T-cell (primary cell): ENCODE measurements at regions of chr1 and their contacts with region 1.

Region 1: GRCh38 chr1:116737020-116737854 is 17.0 kb upstream of the CD2 start:
- DNase-seq: peak; percentile 55 to 88 (median 72)
- ATAC-seq: peak; percentile 57 to 83 (median 79)
- H3K4me3 ChIP-seq: peak overlapping the region in 1 of 2 donors; percentile 7
- H3K4me3 Mint-ChIP-seq: peak overlapping the region; percentile 56 to 76 (median 75)
- H3K27ac ChIP-seq: peak overlapping the region; percentile 96
- H3K27ac Mint-ChIP-seq: peak overlapping the region; percentile 97 to 98
- H3K4me1 ChIP-seq: peaks cover 31 to 48% of the 10 kb centered on the region in 2 experiments
- H3K4me1 Mint-ChIP-seq: peaks cover 45 to 49% (median 48%) of the 10 kb centered on the region in 3 donors
- H3K27me3 ChIP-seq: no peaks in the 10 kb centered on the region
- H3K27me3 Mint-ChIP-seq: no peaks in the 10 kb centered on the region

Region 2: GRCh38 chr1:116724765-116725375 is 12.4 kb before region 1 on chr1:
- CTCF ChIA-PET with region 1: interaction called, 5 to 13 read pairs
- POLR2A ChIA-PET with region 1: interaction called in 1 of 2 experiments, 3 read pairs
- DNase-seq: peak; percentile 46 to 89 (median 71)
- ATAC-seq: peak; percentile 61 to 68 (median 62)
- H3K4me3 ChIP-seq: no peak overlapping the region
- H3K4me3 Mint-ChIP-seq: no peak overlapping the region
- H3K27ac ChIP-seq: no peak overlapping the region
- H3K27ac Mint-ChIP-seq: no peak overlapping the region
- H3K4me1 ChIP-seq: peaks cover 0 to 10% of the 10 kb centered on the region in 2 experiments
- H3K4me1 Mint-ChIP-seq: peaks cover 10 to 18% (median 17%) of the 10 kb centered on the region in 3 donors
- H3K27me3 ChIP-seq: peaks cover 0 to 2% of the 10 kb centered on the region in 2 experiments
- H3K27me3 Mint-ChIP-seq: no peaks in the 10 kb centered on the region

Region 3: GRCh38 chr1:116763787-116764465 is 26.7 kb after region 1 on chr1:
- CTCF ChIA-PET with region 1: interaction called, 3 to 55 read pairs
- POLR2A ChIA-PET with region 1: interaction called, 9 to 15 read pairs
- DNase-seq: peak in 4 of 35 experiments; percentile 17 to 68 (median 34)
- ATAC-seq: peak in 3 of 4 experiments; percentile 7 to 17 (median 15)
- H3K4me3 ChIP-seq: peak overlapping the region; percentile 10 to 39
- H3K4me3 Mint-ChIP-seq: peak overlapping the region; percentile 70 to 100 (median 72)
- H3K27ac ChIP-seq: peak overlapping the region; percentile 87
- H3K27ac Mint-ChIP-seq: peak overlapping the region; percentile 99 to 100
- H3K4me1 ChIP-seq: peaks cover 93 to 95% of the 10 kb centered on the region in 2 experiments
- H3K4me1 Mint-ChIP-seq: peaks cover 99% of the 10 kb centered on the region in 3 donors
- H3K27me3 ChIP-seq: no peaks in the 10 kb centered on the region
- H3K27me3 Mint-ChIP-seq: no peaks in the 10 kb centered on the region

Region 4: GRCh38 chr1:116794371-116794770 is 57.1 kb after region 1 on chr1:
- CTCF ChIA-PET with region 1: no interaction called
- POLR2A ChIA-PET with region 1: no interaction called
- DNase-seq: no peak
- ATAC-seq: no peak
- H3K4me3 ChIP-seq: no peak overlapping the region
- H3K4me3 Mint-ChIP-seq: no peak overlapping the region
- H3K27ac ChIP-seq: no peak overlapping the region
- H3K27ac Mint-ChIP-seq: peak overlapping the region in 1 of 2 donors; percentile 11
- H3K4me1 ChIP-seq: peaks cover 10 to 33% of the 10 kb centered on the region in 2 experiments
- H3K4me1 Mint-ChIP-seq: peaks cover 48 to 67% (median 64%) of the 10 kb centered on the region in 3 donors
- H3K27me3 ChIP-seq: no peaks in the 10 kb centered on the region
- H3K27me3 Mint-ChIP-seq: no peaks in the 10 kb centered on the region

Region 5: DNA sequence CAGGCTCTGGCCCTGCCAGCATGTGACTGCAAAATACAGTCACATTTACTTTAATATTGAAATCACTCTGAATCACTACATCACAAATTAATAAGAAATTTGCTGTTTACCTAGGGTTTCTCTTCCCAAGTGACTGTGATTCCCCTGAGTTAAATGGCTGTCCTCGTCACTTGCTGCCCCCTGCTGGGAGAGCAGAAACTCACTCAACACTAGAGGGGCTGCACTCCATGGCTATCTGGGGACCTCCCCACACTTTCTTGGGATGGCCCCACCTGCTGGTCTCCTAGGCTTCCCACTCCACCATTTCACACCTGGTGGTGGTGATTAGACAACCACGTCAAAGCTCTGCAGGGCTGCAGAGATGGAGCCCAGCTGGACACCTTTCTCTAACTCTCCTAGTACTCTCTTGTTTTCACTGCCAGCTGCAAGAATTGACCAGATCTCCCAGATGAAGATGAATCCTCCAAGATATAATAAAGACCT is 80.4 kb after region 1 on chr1:
- CTCF ChIA-PET with region 1: interaction called, 7 to 91 read pairs
- POLR2A ChIA-PET with region 1: interaction called, 3 to 10 read pairs
- DNase-seq: peak; percentile 39 to 86 (median 60)
- ATAC-seq: peak; percentile 71 to 77 (median 74)
- H3K4me3 ChIP-seq: no peak overlapping the region
- H3K4me3 Mint-ChIP-seq: peak overlapping the region in 2 of 3 donors; percentile 34 to 70
- H3K27ac ChIP-seq: peak overlapping the region; percentile 61
- H3K27ac Mint-ChIP-seq: peak overlapping the region; percentile 64 to 80
- H3K4me1 ChIP-seq: peaks cover 23 to 27% of the 10 kb centered on the region in 2 experiments
- H3K4me1 Mint-ChIP-seq: peaks cover 28 to 33% (median 32%) of the 10 kb centered on the region in 3 donors
- H3K27me3 ChIP-seq: no peaks in the 10 kb centered on the region
- H3K27me3 Mint-ChIP-seq: no peaks in the 10 kb centered on the region

Region 6: GRCh38 chr1:116934586-116935207 is 197.5 kb after region 1 on chr1:
- CTCF ChIA-PET with region 1: interaction called, 5 to 20 read pairs
- POLR2A ChIA-PET with region 1: no interaction called
- DNase-seq: peak in 1 of 35 experiments; percentile 53
- ATAC-seq: no peak
- H3K4me3 ChIP-seq: no peak overlapping the region
- H3K4me3 Mint-ChIP-seq: no peak overlapping the region
- H3K27ac ChIP-seq: no peak overlapping the region
- H3K27ac Mint-ChIP-seq: peak overlapping the region in 1 of 2 donors; percentile 83
- H3K4me1 ChIP-seq: peaks cover 6 to 12% of the 10 kb centered on the region in 2 experiments
- H3K4me1 Mint-ChIP-seq: peaks cover 18 to 24% (median 22%) of the 10 kb centered on the region in 3 donors
- H3K27me3 ChIP-seq: no peaks in the 10 kb centered on the region
- H3K27me3 Mint-ChIP-seq: no peaks in the 10 kb centered on the region

Region 7: DNA sequence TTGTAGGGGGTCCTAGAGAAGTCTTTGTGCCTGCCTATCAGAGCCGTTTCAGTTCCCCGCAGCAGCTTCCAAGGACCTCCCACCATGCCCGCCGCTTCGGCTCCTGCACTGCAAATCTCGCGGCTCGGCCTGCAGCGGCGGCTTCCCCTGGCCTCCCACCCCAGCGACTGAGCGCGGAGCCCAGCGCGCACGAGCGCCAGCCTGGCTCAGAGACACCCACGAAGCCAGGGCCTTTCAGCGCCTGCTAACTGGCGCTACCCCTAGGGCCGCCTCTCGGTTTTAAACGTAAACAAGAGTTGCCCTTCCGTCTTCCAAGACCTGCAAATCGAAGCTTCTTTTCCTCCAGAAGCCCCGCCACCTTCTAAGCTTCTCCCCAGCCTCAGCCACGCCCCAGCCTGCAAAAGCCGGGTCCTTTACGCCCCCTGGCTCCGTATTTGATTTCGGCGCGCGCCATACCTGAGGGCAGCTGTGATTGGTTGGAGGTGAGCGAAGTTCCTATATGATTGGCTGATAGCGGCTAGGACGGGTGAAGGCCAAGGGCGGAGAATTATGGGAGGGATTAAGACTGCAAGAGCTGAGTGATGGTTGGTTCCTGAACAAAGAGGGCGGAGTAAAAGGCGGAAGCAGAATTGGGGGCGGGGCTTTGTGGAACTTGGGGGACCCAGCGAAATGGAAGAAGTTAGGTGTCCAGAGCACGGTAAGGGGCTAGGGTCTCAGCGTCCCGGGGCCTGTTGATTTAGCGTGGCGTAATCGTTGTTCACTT is 322.6 kb after region 1 on chr1 and contains the start of gene TTF2:
- CTCF ChIA-PET with region 1: interaction called, 29 to 34 read pairs
- POLR2A ChIA-PET with region 1: interaction called, 3 to 17 read pairs
- DNase-seq: peak; percentile 87 to 99 (median 96)
- ATAC-seq: peak; percentile 91 to 96 (median 94)
- H3K4me3 ChIP-seq: peak within 1 kb of the TSS; percentile 70 to 83
- H3K4me3 Mint-ChIP-seq: no peak within 1 kb of the TSS
- H3K27ac ChIP-seq: peak within 1 kb of the TSS; percentile 85
- H3K27ac Mint-ChIP-seq: peak within 1 kb of the TSS; percentile 39 to 77
- H3K4me1 ChIP-seq: peaks cover 12 to 15% of the 10 kb centered on the region in 2 experiments
- H3K4me1 Mint-ChIP-seq: peaks cover 44 to 48% (median 46%) of the 10 kb centered on the region in 3 donors
- H3K27me3 ChIP-seq: no peaks in the 10 kb centered on the region
- H3K27me3 Mint-ChIP-seq: no peaks in the 10 kb centered on the region
- total RNA-seq, gene TTF2: 26.7 to 37.1 (median 33.8) TPM